Posterior cingulate gyrus (tissue), 11 donors: ENCODE measurements at regions of chr2 and their contacts with region 1.

Region 1: DNA sequence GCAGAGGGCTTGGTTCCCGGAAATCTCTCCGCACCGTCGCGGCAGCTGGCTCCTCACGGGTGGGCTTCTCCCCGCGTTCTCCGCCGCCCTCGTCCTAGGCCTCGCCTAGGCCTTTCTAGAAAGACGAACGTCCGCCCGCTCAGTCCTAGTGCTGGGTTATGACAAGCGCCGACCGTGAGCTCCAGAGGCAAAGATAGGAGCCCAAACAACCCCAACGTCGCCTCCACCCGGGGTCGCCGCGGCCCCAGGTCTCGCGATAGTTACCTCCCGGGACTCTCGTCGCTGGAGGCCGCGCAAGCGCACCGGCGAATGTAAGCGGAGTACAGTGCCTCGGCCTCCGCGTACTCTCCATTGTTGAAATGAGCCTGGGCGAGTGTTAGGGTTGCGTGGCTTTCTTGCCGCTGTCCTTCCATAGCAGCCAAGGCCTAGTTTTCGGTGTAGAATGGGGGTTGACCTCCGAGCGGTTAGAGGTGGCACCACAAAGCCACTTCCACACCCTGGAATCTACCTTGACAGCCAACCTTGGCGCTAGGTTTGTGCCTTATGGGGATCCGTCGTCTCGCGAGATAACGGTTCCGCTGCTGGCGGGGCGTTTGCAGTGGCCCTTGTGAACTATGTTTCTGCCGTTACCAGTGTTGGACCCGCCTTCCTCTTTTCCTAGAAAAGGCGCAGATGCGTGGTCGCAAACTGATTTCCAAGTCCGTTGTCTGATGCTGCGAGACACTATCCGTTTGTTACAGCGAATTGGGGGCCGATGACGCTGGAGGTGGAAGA is at the start of gene TTC32:
- DNase-seq: peak; percentile 88 to 99 (median 92)

Region 2: DNA sequence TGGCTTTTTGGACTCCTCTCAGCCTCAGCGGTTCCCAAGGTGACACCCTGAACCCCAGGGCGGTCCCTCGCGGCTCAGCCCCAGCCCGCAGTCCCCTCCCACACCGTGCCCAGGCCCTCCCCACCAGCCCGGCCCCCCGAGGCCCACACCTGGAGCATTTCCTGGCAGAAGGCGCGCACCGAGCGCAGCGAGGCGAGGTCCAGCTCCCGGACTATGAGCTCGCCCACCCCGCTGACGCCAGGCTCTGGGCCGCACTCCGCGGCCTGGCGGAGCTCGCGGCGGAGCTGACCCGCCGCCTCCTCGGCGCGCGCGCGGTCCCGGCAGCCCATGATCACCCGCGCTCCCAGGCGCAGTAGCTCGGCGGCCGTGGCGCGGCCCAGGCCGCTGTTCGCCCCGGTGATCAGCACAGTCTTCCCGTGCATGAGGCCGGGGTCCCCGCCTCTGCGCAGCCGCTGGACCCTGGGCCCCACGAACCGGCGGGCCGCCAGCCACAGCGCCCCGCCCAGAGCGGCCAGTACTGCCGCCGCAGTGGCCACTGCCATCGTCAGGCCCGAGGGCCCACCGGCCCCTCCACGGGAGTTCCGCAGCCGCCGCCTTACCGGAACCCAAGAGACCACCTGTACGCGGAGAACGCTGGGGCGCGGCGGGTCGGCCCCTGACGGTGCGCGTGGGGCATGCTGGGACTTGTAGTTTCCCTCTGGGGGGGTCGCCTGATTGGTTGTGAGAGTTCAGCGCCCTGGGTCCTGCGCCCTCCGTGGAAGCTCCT is 1341.4 kb before region 1 on chr2 and contains the start of gene RDH14:
- intact Hi-C with region 1: loop called (anchors 5 kb)
- DNase-seq: peak; percentile 93 to 99 (median 96)

Region 3: GRCh38 chr2:19989681-19990415 is 88.2 kb after region 1 on chr2 and contains the start of gene WDR35:
- intact Hi-C with region 1: loop called (anchors 5 kb)
- DNase-seq: peak; percentile 82 to 98 (median 89)

Region 4: GRCh38 chr2:20051532-20052228 is 150.1 kb after region 1 on chr2 and contains the start of gene LAPTM4A:
- intact Hi-C with region 1: loop called (anchors 5 kb)
- DNase-seq: peak; percentile 96 to 100 (median 98)